Panc1 (cell line): ENCODE measurements at regions of chr12 and their contacts with region 1.

Region 1: DNA sequence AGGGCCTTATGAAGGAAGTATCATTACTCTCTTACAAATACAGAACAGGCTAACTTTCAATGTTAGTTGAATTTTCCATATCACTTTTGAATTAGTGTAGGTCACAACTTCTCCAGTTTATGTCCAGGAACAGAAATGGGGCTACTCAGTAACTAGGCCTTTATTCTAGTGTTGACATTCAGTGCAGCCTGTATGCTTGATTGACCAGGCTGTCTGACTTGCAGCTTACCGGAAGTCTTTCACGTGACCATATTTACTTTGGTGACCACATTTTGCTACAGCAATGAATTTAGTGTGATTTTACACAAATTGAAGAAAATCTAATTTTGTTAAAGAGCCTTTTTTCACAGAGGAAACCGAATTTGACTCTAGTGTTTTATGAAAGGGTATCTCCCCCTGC is 12.4 kb downstream of the MTERF2 start:
- DNase-seq: no peak
- ATAC-seq: no peak
- H3K4me3 ChIP-seq: no peak overlapping the region
- H3K27ac ChIP-seq: no peak overlapping the region
- H3K4me1 ChIP-seq: peaks cover 10% of the 10 kb centered on the region
- H3K27me3 ChIP-seq: no peaks in the 10 kb centered on the region
- CTCF ChIP-seq: no peak

Region 2: DNA sequence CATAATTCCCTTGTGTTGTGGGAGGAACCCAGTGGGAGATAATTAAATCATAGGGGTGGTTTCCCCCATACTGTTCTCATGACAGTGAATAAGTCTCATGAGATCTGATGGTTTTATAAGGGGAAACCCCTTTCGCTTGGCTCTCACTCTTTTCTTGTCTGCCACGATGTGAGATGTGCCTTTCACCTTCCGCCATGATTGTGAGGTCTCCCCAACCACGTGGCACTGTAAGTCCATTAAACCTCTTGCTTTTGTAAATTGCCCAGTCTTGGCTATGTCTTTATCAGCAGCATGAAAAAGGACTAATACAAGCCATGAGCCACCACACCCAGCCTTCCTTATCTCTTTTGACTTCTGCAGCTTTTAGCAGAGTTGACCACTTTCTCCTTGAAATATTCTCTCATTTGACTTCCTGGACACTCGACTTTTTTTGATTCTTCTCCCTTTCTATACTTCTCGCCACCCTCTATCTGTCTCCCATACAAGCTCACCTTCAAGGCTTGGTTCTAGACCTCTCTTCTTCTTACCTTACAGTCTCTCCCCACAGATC is 10.2 kb after region 1 on chr12:
- CTCF ChIA-PET with region 1: interaction called, 12 read pairs
- POLR2A ChIA-PET with region 1: interaction called, 4 read pairs
- in situ Hi-C with region 1: no loop called
- intact Hi-C with region 1: no loop called
- DNase-seq: no peak
- ATAC-seq: no peak
- H3K4me3 ChIP-seq: no peak overlapping the region
- H3K27ac ChIP-seq: no peak overlapping the region
- H3K4me1 ChIP-seq: peaks cover 18% of the 10 kb centered on the region
- H3K27me3 ChIP-seq: no peaks in the 10 kb centered on the region
- CTCF ChIP-seq: no peak